ENCODE measurements at regions of chr2 and their contacts with region 1.

Region 1: DNA sequence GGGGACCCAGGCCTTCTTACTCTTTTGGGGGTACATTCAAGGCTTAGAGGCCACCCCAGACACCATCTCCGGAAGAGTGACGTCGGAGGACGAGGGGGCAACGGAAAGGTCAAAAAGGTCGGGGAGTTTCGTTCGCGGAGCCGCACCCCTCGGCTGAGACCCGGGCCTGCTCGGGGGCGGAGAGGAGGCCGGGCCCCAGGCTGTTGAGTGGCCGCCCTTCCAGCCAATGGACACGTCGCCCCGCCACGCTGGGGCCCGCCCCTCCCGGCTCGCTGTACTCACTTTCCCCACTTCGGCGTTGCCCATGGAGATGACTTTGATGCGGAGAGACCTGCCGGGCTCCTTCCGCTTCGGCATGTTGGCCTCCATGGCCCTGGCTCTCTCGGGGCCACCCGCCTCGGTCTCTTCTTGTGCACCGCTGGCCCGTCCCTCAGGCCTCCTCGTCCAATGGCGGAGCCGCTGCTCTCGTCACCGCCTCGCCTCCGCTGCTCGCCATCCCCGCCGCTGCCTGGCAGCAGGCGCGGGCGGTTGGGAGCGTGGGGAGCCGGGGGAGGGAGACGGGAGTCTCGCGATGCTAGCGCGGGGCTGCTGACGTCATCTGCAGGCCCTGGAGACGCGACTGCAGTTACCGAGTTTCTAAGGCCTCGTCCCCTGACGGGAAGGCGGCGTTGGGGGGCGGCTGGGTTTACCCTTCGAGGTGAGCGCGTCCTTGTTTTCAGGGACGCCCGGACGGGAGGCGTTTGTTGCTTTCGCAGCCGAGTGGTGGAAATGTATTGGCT is at the start of gene DNAJC27:
- DNase-seq: peak; percentile 93 to 99
- H3K4me3 ChIP-seq: peak within 1 kb of the TSS; percentile 88 to 96 (median 92)
- H3K27ac ChIP-seq: peak within 1 kb of the TSS; percentile 94
- H3K4me1 ChIP-seq: no peaks in the 10 kb centered on the region
- H3K27me3 ChIP-seq: no peaks in the 10 kb centered on the region
- CTCF ChIP-seq: no peak; a peak in 1 of 4 replicates
- EP300 ChIP-seq: no peak
- POLR2A ChIP-seq: peak; percentile 69 to 73
- RAD21 ChIP-seq: no peak
- total RNA-seq, gene DNAJC27: 3.7 and 4.5 TPM in 2 replicates

Region 2: GRCh38 chr2:24993406-24994145 is 21.9 kb after region 1 on chr2:
- CTCF ChIA-PET with region 1: interaction called, 10 read pairs
- POLR2A ChIA-PET with region 1: no interaction called
- DNase-seq: no peak
- H3K4me3 ChIP-seq: no peak overlapping the region
- H3K27ac ChIP-seq: no peak overlapping the region
- H3K4me1 ChIP-seq: no peaks in the 10 kb centered on the region
- H3K27me3 ChIP-seq: no peaks in the 10 kb centered on the region
- CTCF ChIP-seq: no peak
- EP300 ChIP-seq: no peak
- POLR2A ChIP-seq: no peak
- RAD21 ChIP-seq: no peak

Region 3: GRCh38 chr2:25072606-25073005 is 100.9 kb after region 1 on chr2:
- CTCF ChIA-PET with region 1: interaction called, 10 read pairs
- POLR2A ChIA-PET with region 1: no interaction called
- DNase-seq: no peak
- H3K4me3 ChIP-seq: no peak overlapping the region
- H3K27ac ChIP-seq: no peak overlapping the region
- H3K4me1 ChIP-seq: no peaks in the 10 kb centered on the region
- H3K27me3 ChIP-seq: no peaks in the 10 kb centered on the region
- CTCF ChIP-seq: no peak
- EP300 ChIP-seq: no peak
- POLR2A ChIP-seq: no peak
- RAD21 ChIP-seq: no peak

Region 4: DNA sequence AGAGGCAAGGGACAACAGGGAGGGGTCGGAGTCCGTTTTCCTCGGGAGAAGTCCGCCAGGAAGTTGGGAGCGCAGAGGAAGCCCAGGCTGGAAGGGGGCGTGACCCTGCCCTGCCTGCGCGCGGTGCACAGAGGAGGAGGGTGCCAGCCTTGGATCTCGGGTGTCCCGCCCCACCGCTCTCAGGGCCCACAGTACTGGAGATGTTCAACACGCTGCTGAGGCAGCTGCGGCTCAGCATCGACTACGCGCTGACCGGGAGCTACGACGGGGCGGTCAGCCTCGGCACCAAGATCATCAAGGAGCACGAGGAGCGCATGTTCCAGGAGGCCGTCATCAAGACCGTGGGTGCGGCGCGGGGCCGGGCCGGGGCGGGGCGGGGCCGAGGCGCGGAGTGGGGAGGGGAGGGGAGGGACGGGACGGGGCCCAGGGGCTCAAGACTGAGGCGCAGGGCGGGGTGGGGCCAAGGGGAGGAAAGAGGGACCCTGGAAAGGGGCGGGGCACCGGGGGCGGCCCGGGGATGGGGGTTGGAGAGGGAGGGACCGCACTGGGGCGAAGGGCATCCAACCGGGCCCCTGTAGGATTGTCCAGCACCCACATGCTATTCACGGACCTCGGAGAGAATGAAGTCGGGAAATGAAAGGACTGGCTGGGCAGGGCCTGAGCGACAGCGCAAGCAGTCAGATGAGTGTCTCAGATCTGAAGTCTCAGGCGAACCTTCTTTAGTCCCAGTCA is 160.0 kb after region 1 on chr2:
- CTCF ChIA-PET with region 1: interaction called, 176 read pairs
- POLR2A ChIA-PET with region 1: interaction called, 11 read pairs
- DNase-seq: peak in 1 of 2 experiments; percentile 67
- H3K4me3 ChIP-seq: peak overlapping the region; percentile 39 to 56 (median 49); a peak in 7 of 8 replicates
- H3K27ac ChIP-seq: no peak overlapping the region
- H3K4me1 ChIP-seq: peaks cover 0 to 12% (median 7%) of the 10 kb centered on the region in 4 experiments; a peak in 6 of 7 replicates
- H3K27me3 ChIP-seq: peaks cover 2 to 32% (median 21%) of the 10 kb centered on the region in 4 experiments
- CTCF ChIP-seq: no peak
- EP300 ChIP-seq: no peak
- POLR2A ChIP-seq: no peak
- RAD21 ChIP-seq: no peak

Region 5: DNA sequence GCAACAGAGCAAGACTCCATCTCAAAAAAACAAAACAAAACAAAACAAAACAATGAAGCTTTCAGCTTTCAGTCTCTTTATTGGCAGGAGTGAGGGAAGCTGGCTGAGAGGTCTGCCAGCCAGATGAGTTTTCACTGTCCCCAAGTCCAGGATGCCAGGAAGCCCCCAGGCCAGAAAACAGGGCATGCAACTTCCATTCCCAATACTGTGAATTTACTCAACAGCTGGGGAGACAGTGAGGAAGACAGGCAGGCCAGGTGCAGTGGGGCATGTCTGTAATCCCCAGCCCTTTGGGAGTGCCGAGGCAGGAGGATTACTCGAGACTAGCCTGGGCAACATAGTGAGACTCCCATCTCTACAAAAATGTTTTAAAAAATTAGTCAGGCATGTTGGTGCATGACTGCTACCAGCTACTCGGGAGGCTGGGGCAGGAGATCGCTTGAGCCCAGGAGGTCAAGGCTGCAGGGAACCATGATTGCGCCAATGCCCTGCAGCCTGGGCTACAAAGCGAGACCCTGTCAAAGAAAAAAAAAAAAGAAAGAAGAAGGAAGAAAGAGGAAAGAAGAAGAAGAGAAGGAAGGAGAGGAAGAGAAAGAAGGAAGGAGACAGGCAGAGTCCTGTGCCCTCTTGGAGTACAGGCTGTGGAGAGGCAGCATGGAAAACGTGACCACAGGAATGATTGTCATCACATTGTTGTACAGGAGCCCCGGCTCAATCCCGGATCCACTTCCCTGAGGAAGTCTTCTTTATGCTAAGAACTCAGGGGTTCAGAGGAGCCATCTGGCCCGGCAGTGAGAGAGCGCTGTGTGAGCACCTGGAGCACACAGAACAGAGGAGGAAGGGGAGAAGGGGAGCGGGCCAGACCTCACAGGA is 225.8 kb after region 1 on chr2:
- CTCF ChIA-PET with region 1: interaction called, 44 read pairs
- POLR2A ChIA-PET with region 1: interaction called, 3 read pairs
- DNase-seq: no peak
- H3K4me3 ChIP-seq: no peak overlapping the region
- H3K27ac ChIP-seq: no peak overlapping the region
- H3K4me1 ChIP-seq: no peaks in the 10 kb centered on the region; a peak in 1 of 7 replicates
- H3K27me3 ChIP-seq: no peaks in the 10 kb centered on the region
- CTCF ChIP-seq: no peak
- EP300 ChIP-seq: no peak
- POLR2A ChIP-seq: no peak
- RAD21 ChIP-seq: no peak